K562 (cell line): ENCODE measurements at regions of chr17 and their contacts with region 1.

Region 1: GRCh38 chr17:76696763-76697701 is 13.7 kb downstream of the MXRA7 start:
- DNase-seq: no peak
- ATAC-seq: peak; percentile 26
- H3K4me3 ChIP-seq: no peak overlapping the region
- H3K27ac ChIP-seq: no peak overlapping the region
- H3K4me1 ChIP-seq: peaks cover 15 to 36% of the 10 kb centered on the region in 2 experiments
- H3K27me3 ChIP-seq: no peaks in the 10 kb centered on the region
- CTCF ChIP-seq: no peak
- EP300 ChIP-seq: no peak
- POLR2A ChIP-seq: no peak
- RAD21 ChIP-seq: no peak

Region 2: DNA sequence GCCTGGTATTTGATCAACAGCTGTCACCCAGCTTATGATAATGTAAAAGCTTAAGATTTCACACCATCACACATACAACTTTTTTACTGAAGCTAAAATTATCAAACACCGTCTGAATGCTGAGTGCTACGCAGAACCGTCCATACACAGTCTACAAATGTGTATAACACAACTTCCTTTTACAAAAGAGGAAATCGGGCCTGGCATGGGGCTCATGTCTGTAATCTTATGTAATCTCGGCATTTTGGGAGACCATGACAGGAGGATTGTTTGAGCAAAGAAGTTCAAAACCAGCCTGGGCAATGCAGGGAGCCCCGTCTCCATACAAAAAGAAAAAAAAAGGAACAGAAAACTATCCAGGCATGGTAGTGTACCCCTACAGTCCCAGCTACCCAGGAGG is 369.3 kb before region 1 on chr17:
- CTCF ChIA-PET with region 1: no interaction called
- POLR2A ChIA-PET with region 1: no interaction called
- in situ Hi-C with region 1: no loop called
- intact Hi-C with region 1: no loop called
- DNase-seq: no peak
- ATAC-seq: no peak
- H3K4me3 ChIP-seq: no peak overlapping the region
- H3K27ac ChIP-seq: no peak overlapping the region
- H3K4me1 ChIP-seq: no peaks in the 10 kb centered on the region; a peak in 2 of 5 replicates
- H3K27me3 ChIP-seq: no peaks in the 10 kb centered on the region
- CTCF ChIP-seq: no peak
- EP300 ChIP-seq: no peak
- POLR2A ChIP-seq: no peak
- RAD21 ChIP-seq: no peak

Region 3: GRCh38 chr17:76709077-76709950 is 12.3 kb after region 1 on chr17:
- CTCF ChIA-PET with region 1: no interaction called
- POLR2A ChIA-PET with region 1: interaction called, 19 read pairs
- in situ Hi-C with region 1: no loop called
- intact Hi-C with region 1: no loop called
- DNase-seq: peak in 2 of 4 experiments; percentile 51 to 55
- ATAC-seq: peak; percentile 49
- H3K4me3 ChIP-seq: peak overlapping the region; percentile 42; the same call in 1 of the 2 replicates
- H3K27ac ChIP-seq: no peak overlapping the region
- H3K4me1 ChIP-seq: peaks cover 25 to 35% of the 10 kb centered on the region in 2 experiments; a peak in 4 of 5 replicates
- H3K27me3 ChIP-seq: no peaks in the 10 kb centered on the region
- CTCF ChIP-seq: no peak
- EP300 ChIP-seq: no peak
- POLR2A ChIP-seq: no peak
- RAD21 ChIP-seq: no peak

Region 4: GRCh38 chr17:76742958-76743357 is 45.9 kb after region 1 on chr17:
- CTCF ChIA-PET with region 1: no interaction called
- POLR2A ChIA-PET with region 1: no interaction called
- in situ Hi-C with region 1: no loop called
- intact Hi-C with region 1: no loop called
- DNase-seq: no peak
- ATAC-seq: no peak
- H3K4me3 ChIP-seq: no peak overlapping the region
- H3K27ac ChIP-seq: no peak overlapping the region
- H3K4me1 ChIP-seq: peaks cover 0 to 14% of the 10 kb centered on the region in 2 experiments; a peak in 4 of 5 replicates
- H3K27me3 ChIP-seq: no peaks in the 10 kb centered on the region
- CTCF ChIP-seq: no peak
- EP300 ChIP-seq: no peak
- POLR2A ChIP-seq: no peak
- RAD21 ChIP-seq: no peak